ENCODE measurements at regions of chr1 and their contacts with region 1.

Region 1: GRCh38 chr1:145936247-145936646 is 9.0 kb upstream of the RBM8A start:
- DNase-seq: no peak
- H3K4me3 ChIP-seq: no peak overlapping the region
- H3K27ac ChIP-seq: no peak overlapping the region
- H3K4me1 ChIP-seq: no peaks in the 10 kb centered on the region
- H3K27me3 ChIP-seq: no peaks in the 10 kb centered on the region
- CTCF ChIP-seq: no peak

Region 2: DNA sequence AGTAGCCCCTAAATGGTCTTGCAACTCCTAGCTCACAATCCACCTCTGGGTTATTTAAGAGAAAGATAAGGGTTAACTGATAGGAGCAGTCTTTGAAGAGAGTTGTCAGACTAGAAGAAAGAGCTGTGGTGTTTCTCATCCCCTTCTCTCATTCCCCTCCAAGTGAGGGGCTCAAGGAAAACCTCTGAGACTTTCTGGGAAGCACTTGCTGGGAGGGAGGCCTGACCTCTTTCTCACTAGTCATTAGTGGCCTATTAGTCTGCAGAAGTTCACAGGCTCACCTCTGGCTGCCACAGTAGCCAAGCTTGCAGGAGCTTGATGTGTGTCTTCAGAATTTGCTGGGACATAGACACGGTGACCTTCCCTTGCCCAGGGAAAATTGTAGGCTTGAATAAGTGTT is 334.7 kb before region 1 on chr1:
- CTCF ChIA-PET with region 1: no interaction called
- POLR2A ChIA-PET with region 1: no interaction called
- intact Hi-C with region 1: no loop called
- DNase-seq: no peak
- H3K4me3 ChIP-seq: no peak overlapping the region
- H3K27ac ChIP-seq: no peak overlapping the region
- H3K4me1 ChIP-seq: no peaks in the 10 kb centered on the region
- H3K27me3 ChIP-seq: peaks cover 8% of the 10 kb centered on the region
- CTCF ChIP-seq: no peak

Region 3: GRCh38 chr1:145858894-145859490 is 77.3 kb before region 1 on chr1 and contains the start of gene PIAS3:
- CTCF ChIA-PET with region 1: no interaction called
- POLR2A ChIA-PET with region 1: no interaction called
- intact Hi-C with region 1: no loop called
- DNase-seq: peak; percentile 96
- H3K4me3 ChIP-seq: peak within 1 kb of the TSS; percentile 91
- H3K27ac ChIP-seq: peak within 1 kb of the TSS; percentile 78
- H3K4me1 ChIP-seq: peaks cover 9% of the 10 kb centered on the region
- H3K27me3 ChIP-seq: no peaks in the 10 kb centered on the region
- CTCF ChIP-seq: no peak
- total RNA-seq, gene PIAS3: 41.8 and 47.0 TPM in 2 replicates

Region 4: DNA sequence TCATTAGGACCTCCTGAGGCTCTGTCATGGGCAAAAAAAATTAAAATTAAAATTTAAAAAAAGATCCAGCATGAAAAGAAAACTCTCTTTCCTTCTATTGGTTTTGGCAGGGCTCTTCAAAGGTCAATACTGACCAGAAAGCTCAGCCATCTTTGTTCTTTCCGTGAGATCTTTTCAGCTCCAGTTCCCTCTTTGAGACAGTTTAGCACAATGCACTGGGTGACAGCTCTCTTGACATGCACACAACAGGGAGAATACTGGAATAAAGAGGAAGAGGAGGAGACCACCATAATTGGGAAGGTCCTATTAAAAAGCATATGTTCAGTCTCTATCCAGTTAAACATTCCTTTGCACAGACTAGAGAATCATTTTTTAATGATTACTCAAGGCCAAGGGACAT is 15.3 kb after region 1 on chr1:
- CTCF ChIA-PET with region 1: no interaction called
- POLR2A ChIA-PET with region 1: interaction called, 5 read pairs
- intact Hi-C with region 1: loop called (anchors 1 kb)
- DNase-seq: no peak
- H3K4me3 ChIP-seq: no peak overlapping the region
- H3K27ac ChIP-seq: no peak overlapping the region
- H3K4me1 ChIP-seq: peaks cover 25% of the 10 kb centered on the region
- H3K27me3 ChIP-seq: no peaks in the 10 kb centered on the region
- CTCF ChIP-seq: no peak

Measured in A673 (cell line).